ENCODE measurements at regions of chr20 and their contacts with region 1.

Region 1: GRCh38 chr20:59782986-59783640 is 150.3 kb downstream of the SYCP2 start:
- DNase-seq: peak; percentile 55
- H3K4me3 Mint-ChIP-seq: no peak overlapping the region
- H3K27ac Mint-ChIP-seq: no peak overlapping the region
- H3K4me1 Mint-ChIP-seq: peaks cover 14% of the 10 kb centered on the region
- H3K27me3 Mint-ChIP-seq: no peaks in the 10 kb centered on the region
- CTCF ChIP-seq: peak; percentile 95

Region 2: GRCh38 chr20:59386809-59387208 is 396.3 kb before region 1 on chr20:
- CTCF ChIA-PET with region 1: no interaction called
- POLR2A ChIA-PET with region 1: no interaction called
- intact Hi-C with region 1: no loop called
- DNase-seq: no peak
- H3K4me3 Mint-ChIP-seq: no peak overlapping the region
- H3K27ac Mint-ChIP-seq: no peak overlapping the region
- H3K4me1 Mint-ChIP-seq: no peaks in the 10 kb centered on the region
- H3K27me3 Mint-ChIP-seq: peaks cover 29% of the 10 kb centered on the region
- CTCF ChIP-seq: no peak

Region 3: DNA sequence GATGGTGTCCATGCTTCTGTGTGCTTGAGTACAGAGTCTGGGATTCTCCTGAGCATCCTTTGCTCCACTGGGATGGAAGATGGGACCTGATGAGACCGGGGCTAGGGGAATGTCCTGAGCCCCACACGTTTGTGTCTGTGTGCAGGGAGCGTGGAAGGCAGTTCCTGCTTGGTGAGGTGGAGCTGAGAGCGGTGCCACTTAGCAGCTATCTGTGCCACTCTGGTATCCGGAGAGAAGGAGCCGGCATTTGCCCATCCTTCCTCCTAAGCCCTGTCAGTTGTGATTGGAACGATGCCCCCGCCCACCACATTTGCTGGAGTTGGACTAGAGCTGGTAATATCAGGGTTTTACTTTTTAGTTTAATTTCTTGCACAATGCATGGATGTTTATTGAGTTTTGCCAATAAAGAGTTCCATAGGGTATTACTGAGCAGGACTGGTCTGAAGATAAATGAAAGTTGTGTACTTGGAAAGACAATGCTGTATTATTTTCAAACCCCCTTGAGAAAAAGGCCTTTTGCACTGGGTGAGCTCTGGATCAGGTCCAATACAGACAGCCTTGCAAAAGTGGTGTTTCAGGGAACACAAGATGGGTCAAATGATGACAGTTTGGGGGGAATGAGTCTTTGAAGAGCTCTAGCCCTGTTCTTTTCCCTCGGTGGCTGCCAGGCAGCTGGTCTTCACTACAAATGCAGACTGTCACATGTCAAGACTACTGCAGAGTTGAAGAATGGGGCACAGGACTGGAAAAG is 19.5 kb after region 1 on chr20:
- CTCF ChIA-PET with region 1: interaction called, 14 read pairs
- POLR2A ChIA-PET with region 1: no interaction called
- intact Hi-C with region 1: no loop called
- DNase-seq: no peak
- H3K4me3 Mint-ChIP-seq: no peak overlapping the region
- H3K27ac Mint-ChIP-seq: no peak overlapping the region
- H3K4me1 Mint-ChIP-seq: no peaks in the 10 kb centered on the region
- H3K27me3 Mint-ChIP-seq: no peaks in the 10 kb centered on the region
- CTCF ChIP-seq: no peak

Region 4: GRCh38 chr20:59825944-59826771 is 43.0 kb after region 1 on chr20:
- CTCF ChIA-PET with region 1: interaction called, 929 read pairs
- POLR2A ChIA-PET with region 1: interaction called, 3 read pairs
- intact Hi-C with region 1: no loop called
- DNase-seq: peak; percentile 83
- H3K4me3 Mint-ChIP-seq: peak overlapping the region; percentile 17
- H3K27ac Mint-ChIP-seq: peak overlapping the region; percentile 44
- H3K4me1 Mint-ChIP-seq: peaks cover 65% of the 10 kb centered on the region
- H3K27me3 Mint-ChIP-seq: no peaks in the 10 kb centered on the region
- CTCF ChIP-seq: no peak

Region 5: DNA sequence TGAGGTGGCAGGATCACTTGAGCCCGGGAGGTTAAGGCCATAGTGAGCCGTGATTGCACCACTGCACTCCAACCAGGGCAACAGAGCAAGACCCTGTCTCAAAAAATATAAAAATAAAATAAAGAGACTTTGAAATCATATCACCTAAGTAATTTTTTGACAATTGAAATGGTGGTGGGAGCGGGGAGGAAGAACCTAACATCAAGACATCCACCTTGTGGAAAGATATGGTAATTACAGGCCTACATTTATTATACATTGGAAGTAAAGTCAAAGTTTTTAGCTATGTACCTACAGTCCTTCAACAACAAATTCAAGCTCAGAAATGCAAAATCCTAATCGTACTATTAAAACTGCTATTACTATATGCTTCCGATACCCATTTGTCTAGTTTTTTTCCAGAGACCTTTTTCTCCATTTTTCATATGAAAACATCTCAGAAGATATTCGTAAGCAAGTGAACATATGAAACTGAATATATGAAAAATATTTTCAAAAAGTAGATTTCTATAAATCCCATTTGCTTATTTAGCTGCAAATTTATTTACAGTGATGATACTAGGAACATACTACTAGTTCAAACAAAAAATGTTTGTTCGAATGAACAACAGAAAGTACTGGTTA is 67.0 kb after region 1 on chr20:
- CTCF ChIA-PET with region 1: interaction called, 929 read pairs
- POLR2A ChIA-PET with region 1: interaction called, 34 read pairs
- intact Hi-C with region 1: loop called (anchors 1 kb)
- DNase-seq: peak; percentile 55
- H3K4me3 Mint-ChIP-seq: no peak overlapping the region
- H3K27ac Mint-ChIP-seq: no peak overlapping the region
- H3K4me1 Mint-ChIP-seq: peaks cover 13% of the 10 kb centered on the region
- H3K27me3 Mint-ChIP-seq: no peaks in the 10 kb centered on the region
- CTCF ChIP-seq: peak; percentile 70

Region 6: DNA sequence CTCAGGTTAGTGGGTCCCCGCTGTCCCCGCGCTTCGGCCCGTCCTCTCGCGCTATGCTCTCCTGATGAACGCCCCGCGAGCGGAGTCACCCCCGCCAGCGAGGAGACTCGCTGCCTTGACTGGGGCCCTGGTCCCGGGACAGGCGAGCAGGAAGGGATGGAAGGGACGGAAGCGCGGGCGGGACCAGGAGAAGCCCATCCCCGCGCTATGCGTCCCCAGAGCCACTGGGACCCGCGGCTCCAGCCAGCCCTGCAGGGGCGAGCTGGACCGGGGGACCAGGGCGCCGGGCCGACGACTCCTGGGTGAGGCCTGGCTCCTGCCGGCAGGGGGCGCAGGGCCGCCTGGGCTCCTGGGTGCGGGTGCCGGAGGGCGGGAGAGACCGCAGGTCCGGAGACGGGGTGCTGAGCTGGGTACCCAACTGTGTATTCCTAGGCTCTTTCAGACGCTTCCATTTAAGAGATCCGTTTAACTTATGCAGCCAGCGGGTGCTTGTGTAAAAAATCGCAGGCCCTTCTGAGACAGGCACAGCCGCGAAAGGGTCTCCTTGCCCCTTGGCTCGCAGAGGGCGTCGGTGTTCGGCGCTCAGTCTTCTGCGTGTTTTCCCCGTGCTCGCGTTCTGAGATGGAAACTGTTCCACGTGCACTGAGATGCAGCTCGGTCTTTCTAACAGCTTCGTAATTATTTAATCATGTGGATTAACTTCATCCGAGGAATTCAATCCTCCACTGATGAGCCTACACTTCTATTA is 150.9 kb after region 1 on chr20:
- CTCF ChIA-PET with region 1: interaction called, 27 read pairs
- POLR2A ChIA-PET with region 1: no interaction called
- intact Hi-C with region 1: loop called (anchors 5 kb)
- DNase-seq: peak; percentile 69
- H3K4me3 Mint-ChIP-seq: peak overlapping the region; percentile 70
- H3K27ac Mint-ChIP-seq: no peak overlapping the region
- H3K4me1 Mint-ChIP-seq: peaks cover 16% of the 10 kb centered on the region
- H3K27me3 Mint-ChIP-seq: peaks cover 4% of the 10 kb centered on the region
- CTCF ChIP-seq: peak; percentile 97

Measured in MCF 10A (cell line).